Endothelial cell of umbilical vein (primary cell): ENCODE measurements at regions of chr1 and their contacts with region 1.

Region 1: DNA sequence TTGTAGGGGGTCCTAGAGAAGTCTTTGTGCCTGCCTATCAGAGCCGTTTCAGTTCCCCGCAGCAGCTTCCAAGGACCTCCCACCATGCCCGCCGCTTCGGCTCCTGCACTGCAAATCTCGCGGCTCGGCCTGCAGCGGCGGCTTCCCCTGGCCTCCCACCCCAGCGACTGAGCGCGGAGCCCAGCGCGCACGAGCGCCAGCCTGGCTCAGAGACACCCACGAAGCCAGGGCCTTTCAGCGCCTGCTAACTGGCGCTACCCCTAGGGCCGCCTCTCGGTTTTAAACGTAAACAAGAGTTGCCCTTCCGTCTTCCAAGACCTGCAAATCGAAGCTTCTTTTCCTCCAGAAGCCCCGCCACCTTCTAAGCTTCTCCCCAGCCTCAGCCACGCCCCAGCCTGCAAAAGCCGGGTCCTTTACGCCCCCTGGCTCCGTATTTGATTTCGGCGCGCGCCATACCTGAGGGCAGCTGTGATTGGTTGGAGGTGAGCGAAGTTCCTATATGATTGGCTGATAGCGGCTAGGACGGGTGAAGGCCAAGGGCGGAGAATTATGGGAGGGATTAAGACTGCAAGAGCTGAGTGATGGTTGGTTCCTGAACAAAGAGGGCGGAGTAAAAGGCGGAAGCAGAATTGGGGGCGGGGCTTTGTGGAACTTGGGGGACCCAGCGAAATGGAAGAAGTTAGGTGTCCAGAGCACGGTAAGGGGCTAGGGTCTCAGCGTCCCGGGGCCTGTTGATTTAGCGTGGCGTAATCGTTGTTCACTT is at the start of gene TTF2:
- DNase-seq: peak; percentile 99
- H3K4me3 ChIP-seq: peak within 1 kb of the TSS; percentile 30 to 88 (median 69)
- H3K27ac ChIP-seq: peak within 1 kb of the TSS; percentile 31
- H3K4me1 ChIP-seq: peaks cover 9% of the 10 kb centered on the region
- H3K27me3 ChIP-seq: no peaks in the 10 kb centered on the region
- CTCF ChIP-seq: no peak
- POLR2A ChIP-seq: peak; percentile 42
- total RNA-seq, gene TTF2: 44.1 and 44.4 TPM in 2 replicates

Region 2: GRCh38 chr1:116570358-116571200 is 489.3 kb before region 1 on chr1 and contains the start of gene CD58:
- CTCF ChIA-PET with region 1: interaction called, 9 read pairs
- POLR2A ChIA-PET with region 1: no interaction called
- dilution Hi-C with region 1: no loop called
- intact Hi-C with region 1: loop called (anchors 1 kb)
- DNase-seq: peak; percentile 83
- H3K4me3 ChIP-seq: peak within 1 kb of the TSS; percentile 64 to 93 (median 69)
- H3K27ac ChIP-seq: peak within 1 kb of the TSS; percentile 70
- H3K4me1 ChIP-seq: peaks cover 9% of the 10 kb centered on the region
- H3K27me3 ChIP-seq: peaks cover 6% of the 10 kb centered on the region in 2 experiments
- CTCF ChIP-seq: peak; percentile 75
- POLR2A ChIP-seq: peak; percentile 81
- total RNA-seq, gene CD58: 9.8 and 12.3 TPM in 2 replicates

Region 3: GRCh38 chr1:116763787-116764465 is 295.9 kb before region 1 on chr1:
- CTCF ChIA-PET with region 1: interaction called, 6 read pairs
- POLR2A ChIA-PET with region 1: no interaction called
- dilution Hi-C with region 1: no loop called
- intact Hi-C with region 1: loop called (anchors 1 kb)
- DNase-seq: peak; percentile 5
- H3K4me3 ChIP-seq: no peak overlapping the region
- H3K27ac ChIP-seq: no peak overlapping the region
- H3K4me1 ChIP-seq: no peaks in the 10 kb centered on the region
- H3K27me3 ChIP-seq: no peaks in the 10 kb centered on the region
- CTCF ChIP-seq: peak; percentile 30 to 50
- POLR2A ChIP-seq: no peak

Region 4: GRCh38 chr1:116853670-116854402 is 206.0 kb before region 1 on chr1:
- CTCF ChIA-PET with region 1: interaction called, 4 read pairs
- POLR2A ChIA-PET with region 1: no interaction called
- dilution Hi-C with region 1: no loop called
- intact Hi-C with region 1: loop called (anchors 1 kb)
- DNase-seq: peak; percentile 94
- H3K4me3 ChIP-seq: no peak overlapping the region
- H3K27ac ChIP-seq: peak overlapping the region; percentile 72
- H3K4me1 ChIP-seq: peaks cover 30% of the 10 kb centered on the region
- H3K27me3 ChIP-seq: no peaks in the 10 kb centered on the region
- CTCF ChIP-seq: no peak
- POLR2A ChIP-seq: peak; percentile 3

Region 5: DNA sequence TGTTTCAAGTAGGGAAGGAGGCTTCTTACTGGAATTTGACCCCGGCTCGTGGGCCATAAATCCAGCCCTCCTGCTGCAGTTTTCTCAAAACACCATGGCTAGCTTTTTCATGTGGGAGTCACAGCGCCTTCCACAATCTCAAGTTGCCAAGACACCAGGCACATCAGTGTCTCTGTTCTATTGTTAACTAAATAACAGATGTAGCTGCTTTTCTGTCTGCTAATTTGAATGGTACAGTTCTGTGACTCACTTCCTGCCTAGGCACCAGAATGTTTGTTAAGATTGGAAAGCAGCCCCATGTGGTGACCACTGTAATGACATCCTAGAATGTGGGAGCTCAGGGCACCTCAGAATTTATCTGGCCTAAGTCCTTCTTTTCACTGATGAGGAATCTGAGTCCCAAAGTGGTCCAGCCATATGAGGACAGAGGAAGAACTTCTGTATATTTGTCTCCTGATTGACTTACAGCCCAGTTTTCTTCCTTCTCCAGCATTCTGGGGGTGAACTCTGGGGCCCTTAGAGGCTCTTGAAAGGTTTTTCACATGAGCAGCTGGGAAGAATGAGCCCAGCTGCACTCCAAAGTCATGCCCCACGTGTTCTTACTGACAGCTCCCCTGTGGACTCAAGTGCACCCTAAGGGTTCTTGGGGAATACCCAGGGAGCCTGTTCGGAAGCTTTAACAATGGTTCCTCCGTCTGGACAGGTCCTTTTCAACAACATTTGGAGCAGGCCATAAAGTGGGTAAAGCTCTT is 34.2 kb after region 1 on chr1:
- CTCF ChIA-PET with region 1: interaction called, 23 read pairs
- POLR2A ChIA-PET with region 1: no interaction called
- dilution Hi-C with region 1: no loop called
- intact Hi-C with region 1: loop called (anchors 2 kb)
- DNase-seq: peak; percentile 90
- H3K4me3 ChIP-seq: peak overlapping the region in 1 of 3 experiments; percentile 31
- H3K27ac ChIP-seq: peak overlapping the region; percentile 99
- H3K4me1 ChIP-seq: peaks cover 35% of the 10 kb centered on the region
- H3K27me3 ChIP-seq: no peaks in the 10 kb centered on the region
- CTCF ChIP-seq: peak; percentile 36
- POLR2A ChIP-seq: no peak

Region 6: GRCh38 chr1:117466761-117467160 is 406.9 kb after region 1 on chr1:
- CTCF ChIA-PET with region 1: no interaction called
- POLR2A ChIA-PET with region 1: no interaction called
- dilution Hi-C with region 1: no loop called
- intact Hi-C with region 1: loop called (anchors 10 kb)
- DNase-seq: peak; percentile 86
- H3K4me3 ChIP-seq: peak overlapping the region in 2 of 3 experiments; percentile 52 to 53
- H3K27ac ChIP-seq: peak overlapping the region; percentile 89
- H3K4me1 ChIP-seq: peaks cover 28% of the 10 kb centered on the region
- H3K27me3 ChIP-seq: no peaks in the 10 kb centered on the region
- CTCF ChIP-seq: no peak
- POLR2A ChIP-seq: no peak

Region 7: DNA sequence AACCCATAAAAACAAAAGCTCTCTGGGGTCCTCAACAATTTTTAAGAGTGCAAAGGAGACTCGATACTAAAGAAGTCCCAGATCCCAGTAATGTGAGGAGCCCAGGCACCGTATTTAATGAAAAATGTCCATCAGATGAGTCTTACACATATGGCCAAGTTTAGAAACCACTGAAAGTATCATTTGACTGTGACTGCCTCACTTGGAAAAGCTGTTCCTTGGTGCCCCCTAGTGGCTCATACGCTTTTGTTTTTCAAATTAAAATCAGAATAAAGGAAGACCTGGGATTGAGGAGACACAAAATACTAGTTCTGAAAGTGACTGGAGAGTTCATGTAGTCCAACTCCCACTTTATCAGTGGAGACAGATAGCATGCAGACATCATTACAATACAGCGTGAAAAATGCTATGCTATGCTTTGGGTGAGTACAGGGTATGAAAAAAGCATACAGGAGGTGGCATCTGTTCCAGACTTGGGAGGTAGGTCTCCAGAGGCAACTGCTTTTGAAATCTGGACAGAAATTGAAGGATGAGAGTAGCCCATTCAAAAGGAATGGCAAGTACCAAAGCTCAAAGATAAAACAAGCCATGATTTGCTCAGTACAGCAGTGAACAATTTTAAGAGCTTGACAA is 835.7 kb after region 1 on chr1:
- CTCF ChIA-PET with region 1: no interaction called
- POLR2A ChIA-PET with region 1: no interaction called
- dilution Hi-C with region 1: no loop called
- intact Hi-C with region 1: loop called (anchors 10 kb)
- DNase-seq: peak; percentile 76
- H3K4me3 ChIP-seq: no peak overlapping the region
- H3K27ac ChIP-seq: no peak overlapping the region
- H3K4me1 ChIP-seq: no peaks in the 10 kb centered on the region
- H3K27me3 ChIP-seq: no peaks in the 10 kb centered on the region
- CTCF ChIP-seq: peak; percentile 58 to 68
- POLR2A ChIP-seq: no peak